ENCODE measurements at regions of chr1 and their contacts with region 1.

Region 1: DNA sequence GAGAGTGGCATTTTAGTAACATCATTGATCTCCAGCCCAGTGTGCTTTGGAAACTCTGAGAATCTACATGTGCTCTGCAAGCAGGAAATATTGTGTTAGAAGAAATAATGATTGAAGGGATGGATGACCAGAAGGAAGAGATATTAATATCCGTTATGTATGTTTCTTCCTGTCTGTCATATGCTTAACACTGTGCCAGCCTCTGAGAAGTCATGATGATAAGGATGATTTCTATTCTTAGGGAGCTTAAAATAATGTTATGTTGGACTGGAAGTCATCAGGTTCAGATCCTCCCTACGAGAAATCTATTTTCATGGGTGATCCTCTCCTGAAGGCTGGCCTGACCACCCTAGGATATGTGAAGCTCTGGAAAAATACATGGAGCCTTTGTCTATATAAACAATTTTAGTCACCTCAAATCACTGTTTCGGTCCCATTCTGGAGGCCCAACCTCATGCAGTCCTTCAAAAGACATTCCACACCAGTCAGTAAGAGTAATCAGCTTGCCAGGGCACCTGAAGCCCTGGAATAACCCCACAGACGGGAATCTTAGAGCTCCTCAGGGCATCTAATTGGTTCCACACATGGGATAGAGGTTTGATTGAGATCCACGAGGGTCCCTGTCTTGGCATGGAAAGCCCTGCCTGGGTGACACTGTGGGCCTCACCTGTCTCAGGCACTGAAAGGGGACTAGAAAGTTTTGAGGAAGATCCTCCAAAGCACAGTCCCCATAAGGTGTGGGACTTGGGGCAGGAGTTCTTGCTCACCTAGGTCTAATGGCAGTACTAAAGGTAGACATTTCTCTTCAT is 192.2 kb upstream of the GORAB start:
- DNase-seq: no peak

Region 2: GRCh38 chr1:170461762-170462384 is 122.1 kb after region 1 on chr1:
- intact Hi-C with region 1: loop called in 1 of 2 experiments (anchors 2 kb)
- DNase-seq: no peak

Region 3: DNA sequence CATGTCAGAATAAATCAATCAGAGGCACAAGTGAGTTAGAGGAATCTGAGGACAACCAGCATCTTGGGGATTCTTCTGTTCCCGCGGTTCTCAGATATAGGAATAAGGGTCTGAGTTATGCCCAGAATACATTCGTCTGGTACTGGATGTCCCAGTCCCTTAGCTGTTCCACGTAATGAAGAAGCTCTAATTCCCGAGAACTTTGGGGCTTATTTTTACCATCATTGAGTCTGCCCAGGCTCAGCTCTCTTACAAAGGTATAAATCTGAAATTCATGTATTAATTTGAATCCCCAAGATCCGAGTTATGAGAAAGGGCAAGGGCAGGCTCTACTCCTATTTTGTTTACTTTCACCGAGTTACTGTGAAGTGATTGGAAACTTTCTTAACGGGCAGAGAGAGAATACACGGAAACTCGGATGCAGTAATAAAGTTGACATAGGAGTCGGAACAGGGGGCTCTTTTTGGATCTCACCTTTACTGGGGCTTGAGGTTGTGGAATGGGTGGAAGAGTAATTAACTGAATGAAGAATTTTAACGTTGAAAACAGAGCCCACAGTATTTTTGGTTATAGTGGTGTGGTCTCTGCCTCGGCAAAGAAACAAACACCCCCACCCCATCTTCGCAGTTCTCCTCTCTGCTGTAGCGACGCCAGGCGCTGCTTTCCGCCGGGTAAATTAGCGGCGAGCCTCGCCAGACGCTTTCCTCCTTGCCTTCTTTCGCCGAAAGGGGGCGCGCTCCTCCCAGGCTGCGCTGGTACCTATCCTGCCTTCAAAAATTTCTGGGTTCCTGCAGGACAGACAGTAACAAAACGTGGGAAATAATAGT is 331.3 kb after region 1 on chr1:
- intact Hi-C with region 1: no loop called
- DNase-seq: peak; percentile 93

Measured in posterior vena cava (tissue), 2 donors.